Endothelial cell of umbilical vein (primary cell): ENCODE measurements at regions of chr5 and their contacts with region 1.

Region 1: DNA sequence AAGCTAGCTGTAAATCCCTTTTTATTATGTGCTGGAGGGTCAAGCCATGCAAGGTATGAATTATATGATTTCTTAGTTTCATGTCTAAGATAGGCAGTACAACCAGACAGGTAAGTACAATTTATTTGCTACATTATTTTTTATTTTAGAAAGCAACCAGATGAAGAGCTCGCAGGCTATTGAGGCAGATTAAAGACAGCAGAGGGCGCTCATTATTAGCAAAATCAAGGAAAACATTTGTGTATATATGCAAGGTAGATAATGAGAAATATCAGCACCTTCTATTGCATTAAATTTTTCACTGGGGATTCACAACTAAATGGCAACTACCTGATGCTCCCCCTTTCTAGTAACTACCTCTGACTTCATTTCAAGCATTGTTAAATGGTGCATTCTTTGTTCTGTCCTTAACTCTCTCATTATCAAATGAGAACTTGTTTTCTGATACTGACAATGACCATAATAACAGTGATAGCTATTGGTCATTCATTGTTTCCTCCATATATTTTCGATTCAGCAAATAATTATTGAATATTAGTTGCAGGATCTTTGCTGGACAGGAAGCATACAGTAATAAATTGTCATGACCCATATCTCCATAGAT is 8.6 kb downstream of the SCGB3A2 start:
- DNase-seq: peak; percentile 67
- H3K4me3 ChIP-seq: no peak overlapping the region
- H3K27ac ChIP-seq: no peak overlapping the region
- H3K4me1 ChIP-seq: peaks cover 2% of the 10 kb centered on the region
- H3K27me3 ChIP-seq: no peaks in the 10 kb centered on the region
- CTCF ChIP-seq: peak; percentile 37 to 39
- POLR2A ChIP-seq: no peak

Region 2: GRCh38 chr5:147809830-147810666 is 77.1 kb before region 1 on chr5:
- CTCF ChIA-PET with region 1: no interaction called
- POLR2A ChIA-PET with region 1: no interaction called
- dilution Hi-C with region 1: no loop called
- intact Hi-C with region 1: no loop called
- DNase-seq: no peak
- H3K4me3 ChIP-seq: no peak overlapping the region
- H3K27ac ChIP-seq: no peak overlapping the region
- H3K4me1 ChIP-seq: no peaks in the 10 kb centered on the region
- H3K27me3 ChIP-seq: no peaks in the 10 kb centered on the region
- CTCF ChIP-seq: no peak
- POLR2A ChIP-seq: no peak

Region 3: GRCh38 chr5:147857302-147858129 is 29.6 kb before region 1 on chr5:
- CTCF ChIA-PET with region 1: interaction called, 35 read pairs
- POLR2A ChIA-PET with region 1: no interaction called
- dilution Hi-C with region 1: no loop called
- intact Hi-C with region 1: loop called (anchors 1 kb)
- DNase-seq: peak; percentile 76
- H3K4me3 ChIP-seq: no peak overlapping the region
- H3K27ac ChIP-seq: no peak overlapping the region
- H3K4me1 ChIP-seq: no peaks in the 10 kb centered on the region
- H3K27me3 ChIP-seq: no peaks in the 10 kb centered on the region
- CTCF ChIP-seq: peak; percentile 63 to 67
- POLR2A ChIP-seq: no peak

Region 4: DNA sequence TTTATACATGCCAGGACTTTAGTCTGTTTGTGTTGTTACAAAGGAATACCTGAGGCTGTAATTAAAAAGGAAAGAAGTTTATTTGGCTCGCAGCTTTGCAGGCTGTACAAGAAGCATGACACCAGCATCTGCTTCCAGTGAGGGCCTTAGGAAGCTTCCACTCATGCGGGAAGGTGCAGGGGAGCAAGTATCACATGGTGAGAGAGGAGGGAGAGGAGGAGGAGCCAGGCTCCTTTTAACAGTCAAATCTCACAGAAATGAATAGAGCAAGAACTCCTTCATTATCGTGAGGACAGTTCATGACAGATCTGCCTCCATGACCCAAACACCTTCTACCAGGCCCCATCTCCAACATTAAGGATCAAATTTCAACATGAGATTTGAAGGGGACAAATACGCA is 37.9 kb after region 1 on chr5:
- CTCF ChIA-PET with region 1: interaction called, 13 read pairs
- POLR2A ChIA-PET with region 1: no interaction called
- dilution Hi-C with region 1: no loop called
- intact Hi-C with region 1: no loop called
- DNase-seq: no peak
- H3K4me3 ChIP-seq: no peak overlapping the region
- H3K27ac ChIP-seq: no peak overlapping the region
- H3K4me1 ChIP-seq: no peaks in the 10 kb centered on the region
- H3K27me3 ChIP-seq: no peaks in the 10 kb centered on the region
- CTCF ChIP-seq: no peak
- POLR2A ChIP-seq: no peak

Region 5: DNA sequence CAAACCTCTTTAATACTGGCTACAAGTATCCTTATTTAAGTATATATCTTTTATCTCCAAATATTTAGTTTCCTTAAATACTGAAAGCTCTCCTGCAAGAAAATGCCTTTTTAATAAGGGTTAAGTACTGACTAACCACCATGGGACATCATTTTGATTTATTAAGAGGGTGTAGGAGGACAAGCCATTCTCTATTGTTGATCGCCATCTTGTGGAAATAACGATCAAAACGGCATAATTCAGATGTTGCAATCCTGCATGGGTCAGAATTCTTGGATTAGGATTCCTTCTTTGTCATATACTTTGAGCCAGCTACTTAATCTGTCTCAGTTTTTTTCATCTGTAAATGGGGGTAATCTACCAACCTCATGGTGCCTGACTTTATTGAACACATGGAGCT is 47.9 kb after region 1 on chr5:
- CTCF ChIA-PET with region 1: interaction called, 183 read pairs
- POLR2A ChIA-PET with region 1: no interaction called
- dilution Hi-C with region 1: no loop called
- intact Hi-C with region 1: loop called (anchors 1 kb)
- DNase-seq: peak; percentile 77
- H3K4me3 ChIP-seq: no peak overlapping the region
- H3K27ac ChIP-seq: no peak overlapping the region
- H3K4me1 ChIP-seq: no peaks in the 10 kb centered on the region
- H3K27me3 ChIP-seq: no peaks in the 10 kb centered on the region
- CTCF ChIP-seq: peak; percentile 33 to 34
- POLR2A ChIP-seq: no peak

Region 6: DNA sequence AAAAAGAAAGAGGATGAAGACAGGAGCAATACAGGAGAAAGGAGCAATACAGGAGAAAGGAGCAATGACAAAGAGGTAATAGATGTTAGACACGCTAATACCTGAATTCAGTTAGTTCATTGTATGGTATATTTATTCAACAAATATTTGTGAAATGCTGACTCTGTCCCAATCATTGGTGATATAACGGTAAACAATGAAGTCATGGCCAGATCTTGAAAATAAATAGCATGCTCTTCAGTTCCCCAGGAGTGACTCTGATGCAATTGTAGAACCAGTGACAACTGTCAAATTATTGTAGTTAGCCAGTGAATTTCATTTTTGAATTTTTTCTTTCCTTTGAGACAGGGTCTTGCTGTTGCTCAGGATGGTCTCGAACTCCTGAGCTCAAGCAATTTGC is 233.2 kb after region 1 on chr5:
- CTCF ChIA-PET with region 1: interaction called, 3 read pairs
- POLR2A ChIA-PET with region 1: no interaction called
- dilution Hi-C with region 1: no loop called
- intact Hi-C with region 1: loop called (anchors 2 kb)
- DNase-seq: no peak
- H3K4me3 ChIP-seq: no peak overlapping the region
- H3K27ac ChIP-seq: no peak overlapping the region
- H3K4me1 ChIP-seq: no peaks in the 10 kb centered on the region
- H3K27me3 ChIP-seq: no peaks in the 10 kb centered on the region
- CTCF ChIP-seq: no peak
- POLR2A ChIP-seq: no peak

Region 7: GRCh38 chr5:148209151-148209770 is 322.1 kb after region 1 on chr5:
- CTCF ChIA-PET with region 1: no interaction called
- POLR2A ChIA-PET with region 1: no interaction called
- dilution Hi-C with region 1: no loop called
- intact Hi-C with region 1: no loop called
- DNase-seq: no peak
- H3K4me3 ChIP-seq: no peak overlapping the region
- H3K27ac ChIP-seq: no peak overlapping the region
- H3K4me1 ChIP-seq: no peaks in the 10 kb centered on the region
- H3K27me3 ChIP-seq: no peaks in the 10 kb centered on the region
- CTCF ChIP-seq: no peak
- POLR2A ChIP-seq: no peak